Gastrocnemius medialis (tissue), 4 donors: ENCODE measurements at regions of chr2 and their contacts with region 1.

Region 1: DNA sequence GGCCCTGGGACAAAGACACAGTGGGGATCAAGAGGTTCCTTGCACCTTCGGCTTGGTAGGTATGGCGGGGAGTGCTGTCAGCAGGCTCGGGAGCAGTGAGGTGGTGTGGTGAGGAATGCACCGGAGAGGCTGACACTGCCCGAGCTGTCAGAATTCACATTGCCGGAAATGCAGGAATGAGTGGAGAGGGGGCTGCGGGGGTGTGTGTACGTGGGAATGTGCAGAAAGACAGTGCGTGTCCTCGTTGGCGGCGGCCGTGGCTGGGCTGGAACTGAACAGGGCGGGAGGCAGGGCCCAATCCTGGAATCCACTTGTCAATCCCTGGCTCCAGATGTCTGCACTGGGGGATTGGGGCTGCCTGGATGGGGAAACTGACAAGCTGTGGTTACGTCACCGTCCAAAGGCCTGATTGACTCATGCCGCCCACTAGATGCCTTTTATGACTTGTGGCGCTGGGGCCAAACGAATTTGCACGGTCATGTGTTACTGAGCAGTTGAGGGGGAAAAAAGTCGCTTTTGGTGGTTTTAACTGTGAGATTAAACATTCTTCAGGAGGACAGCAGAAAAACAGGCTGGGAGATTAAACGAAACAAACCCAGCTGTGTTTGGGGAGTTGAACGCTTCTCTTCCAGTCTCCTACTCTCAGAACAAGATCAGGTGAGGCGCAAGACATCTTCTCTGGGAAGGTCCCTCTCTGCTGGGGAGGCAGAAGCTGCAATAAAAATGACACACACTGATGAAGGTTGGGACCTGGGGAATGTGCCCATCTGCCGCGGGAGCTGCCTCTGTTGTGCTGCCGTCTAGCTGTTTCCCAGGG is 189.4 kb upstream of the GLI2 start:
- DNase-seq: peak; percentile 59 to 84
- ATAC-seq: no peak
- H3K4me3 ChIP-seq: no peak overlapping the region
- H3K27ac ChIP-seq: peak overlapping the region; percentile 6 to 83 (median 80)
- H3K4me1 ChIP-seq: peaks cover 38 to 52% of the 10 kb centered on the region in 2 donors
- H3K27me3 ChIP-seq: no peaks in the 10 kb centered on the region
- CTCF ChIP-seq: no peak
- POLR2A ChIP-seq: peak in 1 of 2 donors; percentile 13

Region 2: GRCh38 chr2:120239488-120240287 is 306.6 kb before region 1 on chr2:
- in situ Hi-C with region 1: no loop called
- intact Hi-C with region 1: no loop called
- DNase-seq: no peak
- ATAC-seq: peak; percentile 63 to 76
- H3K4me3 ChIP-seq: no peak overlapping the region
- H3K27ac ChIP-seq: peak overlapping the region in 3 of 4 donors; percentile 48 to 64 (median 57)
- H3K4me1 ChIP-seq: no peaks in the 10 kb centered on the region
- H3K27me3 ChIP-seq: no peaks in the 10 kb centered on the region
- CTCF ChIP-seq: no peak
- POLR2A ChIP-seq: no peak

Region 3: GRCh38 chr2:121185571-121186074 is 639.4 kb after region 1 on chr2:
- in situ Hi-C with region 1: no loop called
- intact Hi-C with region 1: loop called (anchors 5 kb)
- DNase-seq: peak; percentile 70 to 74
- ATAC-seq: peak; percentile 76 to 81
- H3K4me3 ChIP-seq: no peak overlapping the region
- H3K27ac ChIP-seq: peak overlapping the region; percentile 62 to 85 (median 72)
- H3K4me1 ChIP-seq: peaks cover 5 to 23% of the 10 kb centered on the region in 2 donors
- H3K27me3 ChIP-seq: no peaks in the 10 kb centered on the region
- CTCF ChIP-seq: no peak
- POLR2A ChIP-seq: no peak